Heart left ventricle (tissue), 16 donors: ENCODE measurements at regions of chr1 and their contacts with region 1.

Region 1: DNA sequence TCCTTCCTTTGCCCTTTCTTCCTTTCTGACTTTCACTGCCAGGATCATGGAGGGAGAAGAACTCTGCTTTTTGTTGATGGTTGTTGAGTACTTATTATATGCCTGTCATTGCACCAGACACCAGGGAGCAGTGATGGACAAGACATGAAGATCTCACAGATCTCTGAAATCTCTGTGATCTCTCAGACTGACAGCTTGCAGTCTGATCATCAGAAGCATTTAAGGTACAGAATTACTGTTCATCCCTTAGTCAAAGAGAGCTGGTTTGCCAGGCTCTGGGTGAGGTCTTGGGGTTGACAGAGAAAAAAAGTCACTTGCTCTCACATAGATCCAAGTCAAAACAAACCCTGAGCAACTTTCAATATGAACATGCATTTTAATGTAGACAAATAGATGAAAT is 299.5 kb upstream of the FMN2 start:
- DNase-seq: no peak
- ATAC-seq: no peak
- H3K4me3 ChIP-seq: no peak overlapping the region
- H3K27ac ChIP-seq: no peak overlapping the region
- H3K4me1 ChIP-seq: no peaks in the 10 kb centered on the region
- H3K27me3 ChIP-seq: peaks cover 0 to 3% (median 0%) of the 10 kb centered on the region in 9 donors
- CTCF ChIP-seq: no peak
- POLR2A ChIP-seq: no peak

Region 2: DNA sequence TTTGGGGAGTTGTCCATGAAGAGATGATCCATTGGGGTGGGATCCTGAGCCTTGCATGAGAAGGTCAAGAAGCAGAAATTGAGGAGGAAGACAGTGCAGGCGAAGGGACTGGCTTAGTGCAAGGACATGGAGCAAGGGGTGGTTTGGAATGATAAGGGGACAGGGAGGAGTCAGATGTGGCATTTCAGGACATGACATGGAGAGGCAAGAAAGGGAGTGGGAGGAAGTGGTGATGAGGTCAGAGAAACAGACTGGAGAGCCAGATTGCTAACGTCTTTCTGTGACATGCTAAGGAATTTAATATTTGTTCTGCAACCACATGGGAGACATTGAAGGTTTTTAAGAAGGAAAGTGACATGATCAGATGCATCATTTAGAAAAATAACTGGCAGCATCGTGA is 47.3 kb before region 1 on chr1:
- intact Hi-C with region 1: loop called in 1 of 10 experiments (anchors 2 kb)
- DNase-seq: no peak
- ATAC-seq: no peak
- H3K4me3 ChIP-seq: no peak overlapping the region
- H3K27ac ChIP-seq: no peak overlapping the region
- H3K4me1 ChIP-seq: peaks cover 0 to 11% (median 0%) of the 10 kb centered on the region in 12 donors
- H3K27me3 ChIP-seq: no peaks in the 10 kb centered on the region
- CTCF ChIP-seq: no peak
- POLR2A ChIP-seq: no peak

Region 3: DNA sequence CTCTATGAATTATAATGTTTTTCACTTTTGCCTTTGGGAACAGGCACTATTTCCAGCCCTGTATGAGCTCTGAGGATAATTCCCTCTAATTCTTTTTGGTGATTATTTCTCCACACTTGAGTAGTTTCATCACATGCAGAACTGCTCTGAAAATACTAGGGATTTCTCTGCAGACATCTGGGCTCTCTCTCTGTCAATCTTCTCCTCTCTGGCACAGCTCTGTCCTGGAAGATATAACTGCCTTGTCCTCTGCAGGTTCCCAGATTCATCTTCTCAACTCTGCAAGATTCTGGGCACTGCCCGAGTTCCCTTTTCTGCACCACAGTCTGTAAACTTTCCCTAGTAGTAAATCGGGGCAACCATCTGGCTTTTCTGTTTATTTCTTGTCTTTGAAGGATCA is 168.2 kb after region 1 on chr1:
- intact Hi-C with region 1: no loop called
- DNase-seq: no peak
- ATAC-seq: no peak
- H3K4me3 ChIP-seq: no peak overlapping the region
- H3K27ac ChIP-seq: no peak overlapping the region
- H3K4me1 ChIP-seq: no peaks in the 10 kb centered on the region
- H3K27me3 ChIP-seq: peaks cover 0 to 23% (median 0%) of the 10 kb centered on the region in 9 donors
- CTCF ChIP-seq: no peak
- POLR2A ChIP-seq: no peak